A673 (cell line): ENCODE measurements at regions of chr1 and their contacts with region 1.

Region 1: GRCh38 chr1:27149084-27149761 is 5.7 kb downstream of the SLC9A1 start:
- DNase-seq: no peak
- H3K4me3 ChIP-seq: no peak overlapping the region
- H3K27ac ChIP-seq: no peak overlapping the region
- H3K4me1 ChIP-seq: peaks cover 38% of the 10 kb centered on the region
- H3K27me3 ChIP-seq: no peaks in the 10 kb centered on the region
- CTCF ChIP-seq: no peak

Region 2: DNA sequence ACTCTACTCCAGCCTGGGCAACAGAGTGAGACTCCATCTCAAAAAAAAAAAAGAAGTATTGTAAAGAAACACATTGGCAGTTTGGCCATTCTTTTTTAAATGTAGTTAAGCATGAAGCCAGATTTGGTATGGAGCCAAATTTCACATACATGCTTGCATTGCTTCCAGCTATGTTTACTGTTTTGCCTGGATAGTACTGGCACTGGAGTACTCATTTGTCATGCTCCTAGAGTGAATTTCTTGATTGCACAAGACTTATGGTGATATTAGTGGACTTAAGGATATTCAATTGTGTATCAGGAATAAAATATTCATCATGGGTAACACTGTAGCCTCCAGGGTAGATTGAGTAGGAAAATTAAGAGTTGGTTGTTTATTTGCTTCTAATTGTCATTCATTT is 30.2 kb after region 1 on chr1:
- CTCF ChIA-PET with region 1: interaction called, 14 read pairs
- POLR2A ChIA-PET with region 1: no interaction called
- intact Hi-C with region 1: no loop called
- DNase-seq: no peak
- H3K4me3 ChIP-seq: no peak overlapping the region
- H3K27ac ChIP-seq: no peak overlapping the region
- H3K4me1 ChIP-seq: no peaks in the 10 kb centered on the region
- H3K27me3 ChIP-seq: no peaks in the 10 kb centered on the region
- CTCF ChIP-seq: no peak